ENCODE measurements at regions of chr6 and their contacts with region 1.

Region 1: DNA sequence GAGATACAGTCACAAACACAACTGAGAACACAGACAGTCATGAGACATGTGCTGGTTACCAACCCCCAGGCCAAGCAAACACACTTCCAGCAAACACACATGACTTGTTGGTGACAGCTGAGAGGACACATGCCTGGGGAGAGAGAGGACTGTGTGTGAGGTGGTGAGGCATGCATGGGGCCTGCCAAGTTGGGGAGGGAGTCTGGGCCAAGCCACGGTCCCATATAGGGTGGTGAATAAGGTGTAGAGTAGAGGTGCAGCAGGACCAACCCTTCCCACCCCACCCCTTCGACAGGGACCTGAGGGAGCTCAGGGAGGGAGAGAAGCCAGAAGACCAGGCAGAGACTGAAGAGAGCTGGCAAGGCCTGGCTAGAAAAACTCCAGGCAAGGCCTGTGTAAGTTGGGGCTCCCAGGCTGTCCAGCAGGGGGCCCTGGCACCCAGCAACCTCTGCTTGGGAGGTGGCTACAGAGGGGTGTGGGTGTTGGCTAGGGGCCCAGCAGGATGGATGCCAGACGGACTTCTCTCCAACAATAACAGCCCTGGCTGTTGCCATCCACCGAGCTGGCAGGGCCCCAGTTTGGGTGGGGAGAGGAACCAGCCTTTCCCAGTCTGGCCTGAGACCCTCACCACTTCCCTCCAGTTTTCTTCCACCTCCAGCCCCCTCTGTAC is 2.0 kb upstream of the SLC29A1 start:
- DNase-seq: peak; percentile 98
- H3K4me3 ChIP-seq: peak overlapping the region; percentile 63 to 78 (median 68)
- H3K27ac ChIP-seq: peak overlapping the region; percentile 94 to 98 (median 97)
- H3K4me1 ChIP-seq: peaks cover 0 to 94% (median 89%) of the 10 kb centered on the region in 4 donors
- H3K27me3 ChIP-seq: no peaks in the 10 kb centered on the region
- CTCF ChIP-seq: peak; percentile 84 to 93 (median 90)
- EP300 ChIP-seq: peak in 2 of 4 donors; percentile 28 to 67
- POLR2A ChIP-seq: no peak

Region 2: GRCh38 chr6:43687437-43688347 is 533.7 kb before region 1 on chr6 and contains the start of gene MRPS18A:
- intact Hi-C with region 1: no loop called
- DNase-seq: peak; percentile 90
- H3K4me3 ChIP-seq: peak within 1 kb of the TSS; percentile 85 to 93 (median 86)
- H3K27ac ChIP-seq: peak within 1 kb of the TSS; percentile 72 to 78 (median 76)
- H3K4me1 ChIP-seq: peaks cover 0 to 35% (median 20%) of the 10 kb centered on the region in 4 donors
- H3K27me3 ChIP-seq: no peaks in the 10 kb centered on the region
- CTCF ChIP-seq: no peak
- EP300 ChIP-seq: no peak
- POLR2A ChIP-seq: peak; percentile 19 to 76
- total RNA-seq, gene MRPS18A: 28.8 to 43.9 (median 34.1) TPM

Region 3: DNA sequence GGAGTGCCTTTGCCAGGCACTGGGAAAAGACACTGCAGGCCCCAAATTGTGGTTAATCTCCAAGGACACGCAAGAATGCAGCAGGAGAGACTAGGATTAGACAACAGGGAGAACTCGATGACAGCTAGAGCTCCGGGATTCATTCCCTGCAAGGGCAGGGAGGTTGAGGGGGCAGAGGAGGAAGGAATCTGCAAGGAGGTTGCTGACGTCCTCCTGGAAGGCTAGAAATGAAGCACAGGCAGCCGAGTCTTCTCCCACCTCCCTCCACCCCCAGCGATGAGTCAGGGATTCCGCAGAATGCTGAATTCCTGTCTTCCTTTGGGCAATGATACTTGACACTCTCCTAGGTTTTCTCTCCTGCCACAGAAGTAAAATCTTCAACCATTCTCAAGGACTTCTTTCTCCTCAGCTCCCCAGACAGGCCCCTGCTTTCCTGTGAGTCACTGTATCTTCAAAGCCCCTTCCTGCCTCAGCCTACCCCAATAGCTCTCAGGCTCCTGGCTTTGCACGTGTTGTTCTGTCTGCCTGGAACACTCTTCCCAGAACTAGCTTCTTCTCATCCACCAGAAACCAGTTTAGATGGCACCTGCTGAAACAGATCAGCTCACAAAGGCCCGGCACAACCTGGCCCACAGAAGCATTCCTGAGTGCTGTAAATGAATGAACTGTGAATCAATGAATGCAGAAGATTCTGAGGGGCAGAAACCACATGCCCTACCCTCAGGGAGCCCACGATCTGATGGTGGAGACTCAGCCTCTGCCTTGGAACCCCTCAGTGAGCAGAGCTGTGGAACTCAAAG is 179.8 kb before region 1 on chr6:
- intact Hi-C with region 1: no loop called
- DNase-seq: peak; percentile 77
- H3K4me3 ChIP-seq: no peak overlapping the region
- H3K27ac ChIP-seq: peak overlapping the region; percentile 67 to 87 (median 80)
- H3K4me1 ChIP-seq: peaks cover 0 to 56% (median 51%) of the 10 kb centered on the region in 4 donors
- H3K27me3 ChIP-seq: no peaks in the 10 kb centered on the region
- CTCF ChIP-seq: no peak
- EP300 ChIP-seq: no peak
- POLR2A ChIP-seq: no peak

Region 4: GRCh38 chr6:44127186-44128019 is 94.0 kb before region 1 on chr6 and contains the starts of genes MRPL14 and TMEM63B:
- intact Hi-C with region 1: loop called (anchors 5 kb)
- DNase-seq: peak; percentile 94
- H3K4me3 ChIP-seq: peak within 1 kb of the TSS; percentile 89 to 100 (median 98)
- H3K27ac ChIP-seq: peak within 1 kb of the TSS; percentile 89 to 98 (median 94)
- H3K4me1 ChIP-seq: peaks cover 0 to 51% (median 50%) of the 10 kb centered on the region in 4 donors
- H3K27me3 ChIP-seq: no peaks in the 10 kb centered on the region
- CTCF ChIP-seq: no peak
- EP300 ChIP-seq: no peak
- POLR2A ChIP-seq: peak; percentile 65 to 67
- total RNA-seq, gene MRPL14: 32.4 to 55.8 (median 45.3) TPM
- total RNA-seq, gene TMEM63B: 10.0 to 21.3 (median 16.3) TPM

Region 5: DNA sequence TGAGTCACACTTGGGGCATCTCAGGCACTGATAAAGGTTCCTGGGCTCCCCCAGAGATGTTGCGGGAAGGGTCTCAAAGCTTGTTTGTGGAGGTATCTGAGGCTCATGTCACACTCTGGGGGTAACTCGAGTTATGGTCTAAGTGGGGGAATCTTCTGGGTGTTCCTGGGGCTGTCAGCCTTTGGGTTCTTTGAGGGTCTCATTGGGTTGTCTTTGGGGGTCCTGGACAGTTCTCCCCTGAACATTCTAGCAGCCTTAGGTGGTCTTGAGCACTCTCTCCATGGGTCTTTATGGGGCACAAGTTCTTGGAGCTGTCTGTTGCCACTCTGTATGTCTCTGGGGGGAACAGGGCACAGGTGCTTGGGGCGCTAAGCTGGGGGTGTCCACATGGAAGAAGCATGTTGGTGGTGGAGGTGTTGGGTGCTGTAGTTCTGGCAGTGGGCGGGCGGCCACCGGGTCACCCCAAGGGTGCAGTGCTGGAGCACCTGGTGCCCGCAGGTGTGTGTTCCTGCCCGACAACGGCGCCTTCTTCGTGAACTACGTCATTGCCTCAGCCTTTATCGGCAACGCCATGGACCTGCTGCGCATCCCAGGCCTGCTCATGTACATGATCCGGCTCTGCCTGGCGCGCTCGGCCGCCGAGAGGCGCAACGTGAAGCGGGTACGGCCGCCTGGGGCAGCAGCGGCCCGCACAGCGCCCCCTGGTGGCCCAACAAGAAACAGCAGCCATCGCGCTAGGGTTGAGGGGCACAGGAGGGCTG is 69.9 kb before region 1 on chr6:
- intact Hi-C with region 1: no loop called
- DNase-seq: peak; percentile 85
- H3K4me3 ChIP-seq: no peak overlapping the region
- H3K27ac ChIP-seq: no peak overlapping the region
- H3K4me1 ChIP-seq: peaks cover 0 to 7% (median 2%) of the 10 kb centered on the region in 4 donors
- H3K27me3 ChIP-seq: no peaks in the 10 kb centered on the region
- CTCF ChIP-seq: peak; percentile 97 to 100 (median 98)
- EP300 ChIP-seq: no peak
- POLR2A ChIP-seq: no peak

Region 6: GRCh38 chr6:44237813-44238433 is 16.5 kb after region 1 on chr6:
- intact Hi-C with region 1: loop called (anchors 1 kb)
- DNase-seq: peak; percentile 91
- H3K4me3 ChIP-seq: peak overlapping the region; percentile 50 to 67 (median 62)
- H3K27ac ChIP-seq: peak overlapping the region; percentile 94 to 98 (median 97)
- H3K4me1 ChIP-seq: peaks cover 0 to 55% (median 50%) of the 10 kb centered on the region in 4 donors
- H3K27me3 ChIP-seq: no peaks in the 10 kb centered on the region
- CTCF ChIP-seq: peak; percentile 98 to 99 (median 98)
- EP300 ChIP-seq: peak in 1 of 4 donors; percentile 23
- POLR2A ChIP-seq: peak in 1 of 2 donors; percentile 24

Region 7: DNA sequence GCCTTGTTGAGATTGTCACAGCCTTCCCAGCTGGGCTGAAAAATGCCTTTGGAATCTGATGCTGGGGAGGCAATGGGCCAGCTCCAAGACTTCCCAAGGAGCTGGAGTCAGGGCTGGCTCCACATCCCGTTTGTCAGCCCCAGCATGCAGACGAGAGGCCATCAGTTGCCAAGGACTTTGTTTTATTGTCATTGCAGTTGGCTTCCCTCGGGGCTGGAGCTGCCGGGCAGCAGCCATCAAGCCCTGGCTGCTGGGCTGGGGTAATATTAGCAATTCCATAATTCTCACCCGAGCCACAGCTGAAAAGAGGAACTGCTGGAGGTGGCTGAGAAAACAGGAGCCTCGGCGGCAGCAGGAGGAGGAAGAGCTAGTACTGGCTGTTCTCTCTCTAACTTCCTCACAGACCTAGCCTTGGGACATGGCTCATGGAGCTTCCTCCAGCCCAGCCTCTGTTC is 348.5 kb after region 1 on chr6:
- intact Hi-C with region 1: no loop called
- DNase-seq: no peak
- H3K4me3 ChIP-seq: no peak overlapping the region
- H3K27ac ChIP-seq: peak overlapping the region in 2 of 4 donors; percentile 6 to 34
- H3K4me1 ChIP-seq: peaks cover 0 to 14% (median 13%) of the 10 kb centered on the region in 4 donors
- H3K27me3 ChIP-seq: no peaks in the 10 kb centered on the region
- CTCF ChIP-seq: no peak
- EP300 ChIP-seq: no peak
- POLR2A ChIP-seq: no peak

Measured in sigmoid colon (tissue), 7 donors.